CD4-positive, alpha-beta memory T cell (primary cell): ENCODE measurements at regions of chr5 and their contacts with region 1.

Region 1: DNA sequence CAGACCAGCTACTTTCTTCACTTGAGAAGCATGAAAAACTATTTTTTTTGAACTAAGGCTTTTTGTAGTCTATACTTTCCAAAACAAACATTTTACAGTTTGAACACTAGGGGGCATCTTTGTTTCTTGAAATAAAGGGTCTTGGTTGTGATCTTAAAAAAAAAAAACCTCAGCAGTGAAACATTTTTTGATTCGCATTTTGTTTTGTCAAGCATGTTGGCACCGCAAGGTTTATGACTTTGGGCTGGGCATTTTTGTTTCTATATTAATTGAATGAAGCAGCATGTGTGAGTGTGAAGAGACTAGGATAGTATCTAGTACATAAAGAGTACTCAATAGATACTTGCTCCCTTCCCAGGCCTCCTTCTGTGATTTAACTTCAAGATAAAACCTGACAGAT is 31.6 kb upstream of the ACOT12 start:
- DNase-seq: peak in 4 of 5 donors; percentile 49 to 59 (median 56)
- H3K4me3 ChIP-seq: no peak overlapping the region
- H3K4me3 Mint-ChIP-seq: peak overlapping the region in 1 of 8 donors; percentile 58
- H3K27ac ChIP-seq: no peak overlapping the region
- H3K27ac Mint-ChIP-seq: peak overlapping the region in 4 of 7 donors; percentile 5 to 73 (median 7)
- H3K4me1 ChIP-seq: no peaks in the 10 kb centered on the region
- H3K4me1 Mint-ChIP-seq: peaks cover 3 to 7% (median 5%) of the 10 kb centered on the region in 4 donors
- H3K27me3 ChIP-seq: no peaks in the 10 kb centered on the region
- H3K27me3 Mint-ChIP-seq: no peaks in the 10 kb centered on the region

Region 2: DNA sequence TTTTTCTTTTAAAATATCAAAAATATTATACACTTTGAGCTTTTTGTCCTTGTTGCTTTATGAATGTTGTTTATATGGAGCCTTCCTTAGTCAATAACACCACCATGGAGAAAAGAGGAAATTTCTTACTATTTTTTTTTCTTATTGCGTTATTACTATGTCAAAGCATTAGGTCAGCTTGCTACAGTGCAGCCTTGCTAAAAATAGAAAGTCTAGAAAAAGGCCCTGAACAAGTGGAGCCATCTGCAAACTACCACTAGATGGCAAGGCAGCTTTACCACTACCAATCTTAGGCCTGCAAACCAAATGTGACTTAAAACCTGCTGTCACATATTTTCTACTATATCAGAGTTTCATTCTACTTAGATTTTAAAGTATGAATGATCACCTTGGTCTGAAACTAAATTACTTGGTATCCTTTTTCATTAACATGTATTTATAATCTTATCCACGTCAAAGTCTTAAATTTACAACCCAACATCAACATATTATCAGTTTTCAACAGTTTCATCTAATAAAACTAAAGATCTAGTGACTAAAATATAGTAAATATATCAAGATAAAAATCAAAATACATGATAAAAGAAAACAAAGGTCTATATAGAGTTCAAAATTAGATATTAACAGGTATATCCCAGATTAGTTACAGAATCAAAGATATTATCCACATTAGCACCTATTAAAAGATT is 81.5 kb after region 1 on chr5:
- CTCF ChIA-PET with region 1: interaction called, 4 read pairs
- POLR2A ChIA-PET with region 1: no interaction called
- intact Hi-C with region 1: loop called (anchors 2 kb)
- DNase-seq: peak; percentile 36 to 52 (median 41)
- H3K4me3 ChIP-seq: no peak overlapping the region
- H3K4me3 Mint-ChIP-seq: no peak overlapping the region
- H3K27ac ChIP-seq: no peak overlapping the region
- H3K27ac Mint-ChIP-seq: no peak overlapping the region
- H3K4me1 ChIP-seq: no peaks in the 10 kb centered on the region
- H3K4me1 Mint-ChIP-seq: peaks cover 0 to 6% (median under 1%) of the 10 kb centered on the region in 4 donors
- H3K27me3 ChIP-seq: no peaks in the 10 kb centered on the region
- H3K27me3 Mint-ChIP-seq: no peaks in the 10 kb centered on the region

Region 3: GRCh38 chr5:81517462-81517861 is 91.9 kb after region 1 on chr5:
- CTCF ChIA-PET with region 1: no interaction called
- POLR2A ChIA-PET with region 1: no interaction called
- intact Hi-C with region 1: no loop called
- DNase-seq: no peak
- H3K4me3 ChIP-seq: no peak overlapping the region
- H3K4me3 Mint-ChIP-seq: no peak overlapping the region
- H3K27ac ChIP-seq: no peak overlapping the region
- H3K27ac Mint-ChIP-seq: no peak overlapping the region
- H3K4me1 ChIP-seq: no peaks in the 10 kb centered on the region
- H3K4me1 Mint-ChIP-seq: peaks cover 0 to 3% (median under 1%) of the 10 kb centered on the region in 4 donors
- H3K27me3 ChIP-seq: no peaks in the 10 kb centered on the region
- H3K27me3 Mint-ChIP-seq: no peaks in the 10 kb centered on the region

Region 4: GRCh38 chr5:81971712-81972495 is 546.3 kb after region 1 on chr5 and contains the start of gene ATG10:
- CTCF ChIA-PET with region 1: no interaction called
- POLR2A ChIA-PET with region 1: no interaction called
- intact Hi-C with region 1: loop called (anchors 10 kb)
- DNase-seq: peak; percentile 80 to 88 (median 86)
- H3K4me3 ChIP-seq: peak within 1 kb of the TSS; percentile 88 to 94
- H3K4me3 Mint-ChIP-seq: peak within 1 kb of the TSS; percentile 87 to 100 (median 98)
- H3K27ac ChIP-seq: peak within 1 kb of the TSS; percentile 93
- H3K27ac Mint-ChIP-seq: peak within 1 kb of the TSS; percentile 96 to 100 (median 99)
- H3K4me1 ChIP-seq: peaks cover 24% of the 10 kb centered on the region
- H3K4me1 Mint-ChIP-seq: peaks cover 8 to 31% (median 22%) of the 10 kb centered on the region in 4 donors
- H3K27me3 ChIP-seq: no peaks in the 10 kb centered on the region
- H3K27me3 Mint-ChIP-seq: no peaks in the 10 kb centered on the region
- total RNA-seq, gene ATG10: 7.5 to 7.9 TPM

Region 5: DNA sequence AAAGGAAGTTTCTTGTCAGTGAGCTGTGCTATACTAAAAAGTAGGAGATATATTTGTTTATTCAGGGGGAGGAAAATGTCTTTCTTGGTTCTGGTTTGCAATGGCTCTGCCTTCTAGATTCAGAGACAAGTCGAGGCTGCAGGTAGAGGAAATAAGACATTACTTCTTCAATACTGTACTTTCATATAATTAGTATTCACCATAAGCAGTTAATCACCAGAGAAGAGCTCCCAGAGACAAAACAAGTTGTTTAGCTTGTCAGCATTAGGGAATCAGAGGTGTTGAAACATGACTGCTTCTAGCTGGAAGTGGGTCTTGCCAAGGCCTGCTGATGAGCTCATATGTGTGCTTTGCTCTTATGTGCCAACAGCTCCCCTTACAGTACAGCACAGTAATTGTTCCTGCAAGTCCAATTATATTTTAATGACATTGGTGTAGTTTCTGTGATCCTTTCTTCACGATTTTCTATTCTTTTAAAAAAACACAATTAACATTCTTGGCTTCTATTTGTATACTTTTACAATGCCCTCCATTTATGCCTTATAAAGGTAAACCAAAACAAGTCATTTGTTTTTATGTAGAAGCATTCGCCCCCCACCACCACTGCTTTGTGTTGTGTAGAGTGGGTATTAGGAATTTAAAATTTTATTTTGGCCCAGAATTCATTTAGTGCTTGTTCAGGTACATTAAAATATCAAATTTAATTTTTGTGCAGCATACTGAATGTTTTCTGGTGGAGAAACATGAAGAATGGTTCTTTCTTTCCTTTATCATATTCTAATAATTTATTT is 740.4 kb after region 1 on chr5:
- CTCF ChIA-PET with region 1: interaction called, 54 read pairs
- POLR2A ChIA-PET with region 1: interaction called, 3 read pairs
- intact Hi-C with region 1: loop called (anchors 1 kb)
- DNase-seq: peak; percentile 34 to 54 (median 50)
- H3K4me3 ChIP-seq: no peak overlapping the region
- H3K4me3 Mint-ChIP-seq: no peak overlapping the region
- H3K27ac ChIP-seq: no peak overlapping the region
- H3K27ac Mint-ChIP-seq: peak overlapping the region in 2 of 7 donors; percentile 3 to 12
- H3K4me1 ChIP-seq: no peaks in the 10 kb centered on the region
- H3K4me1 Mint-ChIP-seq: peaks cover 0 to 5% (median under 1%) of the 10 kb centered on the region in 4 donors
- H3K27me3 ChIP-seq: no peaks in the 10 kb centered on the region
- H3K27me3 Mint-ChIP-seq: no peaks in the 10 kb centered on the region

Region 6: GRCh38 chr5:82225525-82226172 is 800.1 kb after region 1 on chr5:
- CTCF ChIA-PET with region 1: interaction called, 35 read pairs
- POLR2A ChIA-PET with region 1: no interaction called
- intact Hi-C with region 1: loop called (anchors 1 kb)
- DNase-seq: peak; percentile 58 to 65 (median 63)
- H3K4me3 ChIP-seq: no peak overlapping the region
- H3K4me3 Mint-ChIP-seq: peak overlapping the region in 1 of 8 donors; percentile 51
- H3K27ac ChIP-seq: no peak overlapping the region
- H3K27ac Mint-ChIP-seq: peak overlapping the region in 2 of 7 donors; percentile 4 to 43
- H3K4me1 ChIP-seq: no peaks in the 10 kb centered on the region
- H3K4me1 Mint-ChIP-seq: peaks cover 3 to 14% (median 5%) of the 10 kb centered on the region in 4 donors
- H3K27me3 ChIP-seq: no peaks in the 10 kb centered on the region
- H3K27me3 Mint-ChIP-seq: no peaks in the 10 kb centered on the region